ENCODE measurements at regions of chr16 and their contacts with region 1.

Region 1: GRCh38 chr16:17258848-17259713 is 211.7 kb downstream of the XYLT1 start:
- DNase-seq: no peak
- H3K4me3 ChIP-seq: no peak overlapping the region
- H3K27ac ChIP-seq: no peak overlapping the region
- H3K4me1 ChIP-seq: no peaks in the 10 kb centered on the region
- H3K27me3 ChIP-seq: no peaks in the 10 kb centered on the region
- CTCF ChIP-seq: no peak

Region 2: DNA sequence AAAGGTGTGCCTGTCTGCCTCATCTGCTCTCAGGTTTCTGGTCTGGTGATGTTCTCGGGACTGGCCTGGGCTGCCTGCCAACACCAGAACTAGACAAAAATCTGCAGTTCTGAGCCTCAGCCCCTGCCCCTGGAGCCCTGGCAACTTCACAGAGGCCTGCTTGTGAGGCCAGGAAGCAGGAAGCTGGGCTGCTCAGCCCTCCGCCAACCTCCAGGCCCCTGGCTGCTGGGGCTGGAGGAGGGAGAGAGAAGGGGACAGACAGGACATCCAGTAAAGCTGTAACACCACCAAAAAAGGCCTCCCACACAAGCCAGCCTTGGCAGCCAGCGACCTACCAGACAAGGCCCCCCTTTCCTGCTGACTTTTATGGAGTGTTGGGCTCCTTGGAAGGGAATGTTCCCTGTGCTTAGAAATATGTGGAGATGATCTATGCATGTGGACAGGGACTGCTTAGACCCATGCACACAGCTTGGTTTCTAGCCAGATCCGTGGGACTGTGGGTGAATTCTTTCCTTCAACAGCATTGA is 54.1 kb after region 1 on chr16:
- CTCF ChIA-PET with region 1: no interaction called
- dilution Hi-C with region 1: no loop called
- in situ Hi-C with region 1: loop called in 1 of 2 experiments (anchors 10 kb)
- intact Hi-C with region 1: no loop called
- DNase-seq: peak; percentile 35
- H3K4me3 ChIP-seq: no peak overlapping the region
- H3K27ac ChIP-seq: peak overlapping the region; percentile 28
- H3K4me1 ChIP-seq: peaks cover 20% of the 10 kb centered on the region
- H3K27me3 ChIP-seq: no peaks in the 10 kb centered on the region
- CTCF ChIP-seq: no peak

Measured in mammary epithelial cell (primary cell).